ENCODE measurements at regions of chr6 and their contacts with region 1.

Region 1: GRCh38 chr6:31834434-31835198 is 7.1 kb downstream of the HSPA1B start:
- DNase-seq: peak; percentile 92 to 93 (median 93)
- ATAC-seq: peak; percentile 84
- H3K4me3 ChIP-seq: peak overlapping the region; percentile 90
- H3K4me1 ChIP-seq: peaks cover 54% of the 10 kb centered on the region
- CTCF ChIP-seq: no peak

Region 2: DNA sequence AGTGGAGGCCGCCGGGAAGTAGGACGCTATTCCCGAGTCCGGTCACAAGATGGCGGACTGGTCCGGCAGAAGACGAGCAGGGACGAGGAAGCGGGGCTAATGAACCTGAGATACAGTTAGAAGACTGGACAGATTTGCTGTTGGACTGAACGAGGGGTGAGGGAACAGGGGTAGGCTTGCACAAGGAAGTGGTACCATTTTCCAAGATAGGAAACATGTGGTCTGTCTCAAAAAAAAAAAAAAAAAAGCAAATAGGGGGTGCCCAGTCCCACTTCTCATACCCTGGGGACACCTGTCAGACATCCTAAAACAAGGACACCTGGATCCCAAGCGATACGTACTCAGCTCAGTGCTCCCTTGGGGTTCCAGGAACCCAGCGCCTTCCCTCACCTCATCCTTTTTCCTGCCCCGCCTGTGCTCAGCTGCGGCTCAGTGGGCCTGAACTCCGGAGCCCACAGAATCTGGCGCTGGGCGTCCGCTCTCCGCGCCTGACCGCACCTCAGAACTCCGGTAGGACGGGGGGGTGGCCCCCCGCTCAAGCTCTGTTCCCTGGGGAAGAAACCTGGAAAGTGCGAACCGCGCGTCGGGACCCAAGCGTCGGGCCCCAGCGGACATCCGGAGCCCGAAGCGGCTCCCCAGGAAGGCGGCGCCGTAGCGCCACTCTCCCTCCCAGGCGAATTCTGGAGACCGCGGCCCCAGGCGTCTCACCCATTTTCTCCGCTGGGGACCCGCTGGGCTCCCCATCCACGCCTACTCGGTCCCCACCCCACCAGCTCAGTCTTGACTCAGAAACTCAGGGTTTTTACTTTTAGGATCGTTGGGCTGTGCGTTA is 153.6 kb before region 1 on chr6 and contains the start of gene LY6G5C:
- intact Hi-C with region 1: no loop called
- DNase-seq: peak; percentile 87 to 90 (median 89)
- ATAC-seq: peak; percentile 87
- H3K4me3 ChIP-seq: no peak within 1 kb of the TSS
- H3K4me1 ChIP-seq: peaks cover 14% of the 10 kb centered on the region
- CTCF ChIP-seq: peak; percentile 68
- total RNA-seq, gene LY6G5C: 1.7 to 4.2 (median 2.1) TPM

Region 3: GRCh38 chr6:31729979-31730630 is 104.5 kb before region 1 on chr6:
- intact Hi-C with region 1: loop called in 1 of 2 experiments (anchors 5 kb)
- DNase-seq: peak; percentile 92 to 94 (median 93)
- ATAC-seq: peak; percentile 70
- H3K4me3 ChIP-seq: peak overlapping the region; percentile 33
- H3K4me1 ChIP-seq: peaks cover 34% of the 10 kb centered on the region
- CTCF ChIP-seq: no peak